ENCODE measurements at regions of chr5 and their contacts with region 1.

Region 1: GRCh38 chr5:103139264-103139865 is 19.3 kb downstream of the PPIP5K2 start:
- DNase-seq: peak; percentile 59 to 86 (median 78)
- ATAC-seq: peak; percentile 99
- H3K4me3 ChIP-seq: no peak overlapping the region
- H3K4me3 Mint-ChIP-seq: no peak overlapping the region
- H3K27ac ChIP-seq: no peak overlapping the region
- H3K27ac Mint-ChIP-seq: peak overlapping the region in 1 of 9 donors; percentile 51
- H3K4me1 ChIP-seq: no peaks in the 10 kb centered on the region
- H3K4me1 Mint-ChIP-seq: peaks cover 1 to 11% (median 4%) of the 10 kb centered on the region in 7 donors
- H3K27me3 ChIP-seq: no peaks in the 10 kb centered on the region
- H3K27me3 Mint-ChIP-seq: no peaks in the 10 kb centered on the region

Region 2: GRCh38 chr5:102223542-102224477 is 915.6 kb before region 1 on chr5:
- CTCF ChIA-PET with region 1: no interaction called
- POLR2A ChIA-PET with region 1: no interaction called
- intact Hi-C with region 1: loop called in 1 of 2 experiments (anchors 5 kb)
- DNase-seq: peak in 5 of 9 donors; percentile 10 to 55 (median 37)
- ATAC-seq: no peak
- H3K4me3 ChIP-seq: no peak overlapping the region
- H3K4me3 Mint-ChIP-seq: no peak overlapping the region
- H3K27ac ChIP-seq: no peak overlapping the region
- H3K27ac Mint-ChIP-seq: no peak overlapping the region
- H3K4me1 ChIP-seq: no peaks in the 10 kb centered on the region
- H3K4me1 Mint-ChIP-seq: no peaks in the 10 kb centered on the region
- H3K27me3 ChIP-seq: peaks cover 0 to 5% of the 10 kb centered on the region in 2 donors
- H3K27me3 Mint-ChIP-seq: peaks cover 0 to 8% (median 2%) of the 10 kb centered on the region in 5 donors

Region 3: DNA sequence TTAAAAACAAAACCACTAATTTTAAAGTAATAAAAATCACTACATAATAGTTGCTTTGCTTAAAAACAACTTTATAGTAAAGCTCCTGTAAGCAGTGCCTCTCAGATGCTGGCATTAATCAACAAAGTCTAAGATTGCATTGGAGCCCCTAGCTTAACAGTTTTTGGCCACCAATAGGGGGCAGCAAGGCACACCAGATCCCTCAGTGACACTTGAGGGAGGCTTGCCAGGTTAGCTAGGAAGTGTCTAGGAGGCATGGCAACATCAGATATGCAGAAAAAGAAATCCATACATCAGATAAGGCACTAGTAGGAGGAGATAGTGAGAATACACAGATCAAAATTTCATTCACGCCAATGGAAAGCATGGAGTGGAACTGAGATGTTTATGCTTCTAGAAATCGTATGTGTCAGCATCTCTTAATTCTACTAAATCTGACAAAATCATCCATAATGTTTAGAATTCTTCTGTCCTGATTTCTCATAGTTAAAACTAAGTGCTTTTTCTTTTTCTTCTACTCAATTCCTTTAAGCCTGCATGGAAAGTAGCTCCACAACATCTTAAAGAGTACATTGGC is 457.9 kb before region 1 on chr5:
- CTCF ChIA-PET with region 1: interaction called, 9 read pairs
- POLR2A ChIA-PET with region 1: no interaction called
- intact Hi-C with region 1: loop called (anchors 1 kb)
- DNase-seq: peak in 7 of 9 donors; percentile 7 to 60 (median 25)
- ATAC-seq: peak; percentile 63
- H3K4me3 ChIP-seq: no peak overlapping the region
- H3K4me3 Mint-ChIP-seq: no peak overlapping the region
- H3K27ac ChIP-seq: no peak overlapping the region
- H3K27ac Mint-ChIP-seq: no peak overlapping the region
- H3K4me1 ChIP-seq: no peaks in the 10 kb centered on the region
- H3K4me1 Mint-ChIP-seq: no peaks in the 10 kb centered on the region
- H3K27me3 ChIP-seq: no peaks in the 10 kb centered on the region
- H3K27me3 Mint-ChIP-seq: peaks cover 0 to 7% (median 4%) of the 10 kb centered on the region in 5 donors

Region 4: GRCh38 chr5:102971697-102972293 is 167.6 kb before region 1 on chr5:
- CTCF ChIA-PET with region 1: no interaction called
- POLR2A ChIA-PET with region 1: no interaction called
- intact Hi-C with region 1: loop called (anchors 1 to 5 kb)
- DNase-seq: peak in 1 of 9 donors; percentile 9
- ATAC-seq: no peak
- H3K4me3 ChIP-seq: no peak overlapping the region
- H3K4me3 Mint-ChIP-seq: no peak overlapping the region
- H3K27ac ChIP-seq: no peak overlapping the region
- H3K27ac Mint-ChIP-seq: no peak overlapping the region
- H3K4me1 ChIP-seq: no peaks in the 10 kb centered on the region
- H3K4me1 Mint-ChIP-seq: peaks cover 0 to 5% (median 0%) of the 10 kb centered on the region in 7 donors
- H3K27me3 ChIP-seq: no peaks in the 10 kb centered on the region
- H3K27me3 Mint-ChIP-seq: no peaks in the 10 kb centered on the region

Region 5: GRCh38 chr5:103119765-103120606 is 19.4 kb before region 1 on chr5 and contains the starts of genes GIN1 and PPIP5K2:
- CTCF ChIA-PET with region 1: interaction called, 6 read pairs
- POLR2A ChIA-PET with region 1: interaction called, 10 read pairs
- intact Hi-C with region 1: loop called (anchors 1 to 2 kb)
- DNase-seq: peak; percentile 91 to 98 (median 97)
- ATAC-seq: peak; percentile 96
- H3K4me3 ChIP-seq: peak within 1 kb of the TSS; percentile 92
- H3K4me3 Mint-ChIP-seq: peak within 1 kb of the TSS; percentile 89 to 100 (median 96)
- H3K27ac ChIP-seq: peak within 1 kb of the TSS; percentile 90
- H3K27ac Mint-ChIP-seq: peak within 1 kb of the TSS; percentile 92 to 100 (median 96)
- H3K4me1 ChIP-seq: peaks cover 9 to 29% of the 10 kb centered on the region in 2 donors
- H3K4me1 Mint-ChIP-seq: peaks cover 24 to 74% (median 65%) of the 10 kb centered on the region in 7 donors
- H3K27me3 ChIP-seq: no peaks in the 10 kb centered on the region
- H3K27me3 Mint-ChIP-seq: no peaks in the 10 kb centered on the region
- total RNA-seq, gene GIN1: 4.0 to 20.9 (median 9.6) TPM
- total RNA-seq, gene PPIP5K2: 59.4 to 77.4 (median 69.3) TPM

Measured in naive thymus-derived CD4-positive, alpha-beta T cell (primary cell).